Activated CD8-positive, alpha-beta memory T cell treated with anti-CD3 and anti-CD28 coated beads, Interleukin-2, amount 10 ng/mL, durations not matched to agents 7 days and 5 days (primary cell): ENCODE measurements at regions of chr16 and their contacts with region 1.

Region 1: GRCh38 chr16:66588981-66589713 is 9.9 kb downstream of the CMTM2 start:
- DNase-seq: peak; percentile 91
- ATAC-seq: peak; percentile 98
- H3K4me3 Mint-ChIP-seq: peak overlapping the region; percentile 73
- H3K27ac Mint-ChIP-seq: peak overlapping the region; percentile 75
- H3K4me1 Mint-ChIP-seq: peaks cover 36% of the 10 kb centered on the region
- H3K27me3 Mint-ChIP-seq: peaks cover 4% of the 10 kb centered on the region

Region 2: GRCh38 chr16:66474750-66475199 is 114.4 kb before region 1 on chr16:
- CTCF ChIA-PET with region 1: interaction called, 24 read pairs
- DNase-seq: peak; percentile 88
- ATAC-seq: peak; percentile 90
- H3K4me3 Mint-ChIP-seq: no peak overlapping the region
- H3K27ac Mint-ChIP-seq: peak overlapping the region; percentile 63
- H3K4me1 Mint-ChIP-seq: peaks cover 35% of the 10 kb centered on the region
- H3K27me3 Mint-ChIP-seq: no peaks in the 10 kb centered on the region

Region 3: DNA sequence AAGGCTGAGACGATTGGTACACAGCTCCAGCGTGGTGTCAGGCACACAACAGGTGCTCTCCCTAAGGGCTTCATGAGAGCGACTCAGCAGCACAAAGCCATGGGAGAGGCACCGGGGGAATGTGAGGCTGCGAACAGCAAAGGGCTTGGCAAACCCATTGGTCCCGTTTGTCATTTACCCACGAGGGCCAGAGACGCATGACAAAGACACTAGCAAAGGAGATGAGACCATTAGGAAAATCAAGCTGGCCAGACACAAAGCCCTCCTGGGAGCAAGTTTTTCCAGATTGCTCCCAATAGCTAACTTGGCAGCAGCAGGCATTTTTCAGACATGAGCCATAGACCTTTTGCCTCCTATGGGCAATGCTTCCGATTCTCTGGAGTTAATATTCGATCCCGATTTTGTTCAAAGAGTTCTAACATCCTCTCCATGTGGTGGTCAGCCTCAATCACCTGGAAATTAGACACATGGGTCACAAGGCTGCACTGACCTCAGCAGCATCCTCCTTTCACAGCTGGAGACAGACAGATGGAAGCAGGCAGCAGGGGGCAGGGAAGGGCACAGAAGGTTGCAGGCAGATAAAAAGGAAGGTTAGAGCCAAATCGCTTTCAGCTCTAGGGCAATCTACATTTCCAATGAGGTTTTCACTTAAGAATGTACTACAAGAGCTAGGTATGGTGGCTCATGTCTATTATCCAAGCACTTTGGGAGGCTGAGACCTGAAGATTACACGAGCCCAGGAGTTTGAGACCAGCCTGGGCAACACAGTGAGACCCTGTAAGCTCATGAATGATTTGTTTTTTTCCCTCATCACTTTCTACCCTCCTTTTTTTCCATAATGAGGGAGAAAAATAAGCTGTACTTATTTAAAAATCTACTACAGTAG is 77.3 kb before region 1 on chr16:
- CTCF ChIA-PET with region 1: interaction called, 16 read pairs
- DNase-seq: peak; percentile 40
- ATAC-seq: no peak
- H3K4me3 Mint-ChIP-seq: no peak overlapping the region
- H3K27ac Mint-ChIP-seq: no peak overlapping the region
- H3K4me1 Mint-ChIP-seq: peaks cover 26% of the 10 kb centered on the region
- H3K27me3 Mint-ChIP-seq: no peaks in the 10 kb centered on the region

Region 4: DNA sequence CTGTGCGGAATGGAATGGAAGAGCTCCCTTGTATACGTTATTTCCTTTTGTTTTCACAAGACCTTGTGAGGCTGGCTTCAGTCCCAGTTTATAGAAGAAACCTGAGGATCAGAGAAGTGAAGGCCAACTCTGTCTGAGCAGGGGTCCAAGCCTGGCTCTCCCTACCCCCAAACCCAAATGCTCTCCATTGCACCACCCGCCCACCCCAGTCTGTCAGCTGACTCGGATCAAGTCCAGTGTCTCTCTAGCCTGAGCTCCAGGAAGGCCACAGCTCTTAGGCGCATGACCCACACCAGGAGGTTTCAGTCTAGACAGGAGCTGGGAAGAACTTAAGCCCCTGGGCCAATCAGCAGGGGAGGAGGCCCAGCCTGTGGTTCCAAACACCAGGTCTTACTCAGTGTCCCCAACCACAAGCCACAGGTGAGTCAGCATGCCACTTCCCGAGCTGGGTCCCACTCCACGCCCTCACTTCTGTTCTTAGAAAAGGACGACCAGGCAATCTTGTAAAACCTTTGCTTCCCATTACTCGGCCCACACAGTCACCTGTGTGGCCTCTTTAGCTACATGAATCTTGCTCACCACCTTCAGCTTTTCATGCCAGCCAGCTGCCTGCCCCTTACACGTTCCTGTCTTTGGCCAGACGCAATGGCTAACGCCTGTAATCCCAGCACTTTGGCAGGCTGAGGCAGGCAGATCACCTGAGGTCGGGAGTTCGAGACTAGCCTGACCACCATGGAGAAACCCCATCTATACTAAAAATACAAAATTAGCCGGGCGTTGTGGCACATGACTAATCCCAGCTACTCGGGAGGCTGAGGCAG is 67.0 kb before region 1 on chr16:
- CTCF ChIA-PET with region 1: interaction called, 20 read pairs
- DNase-seq: peak; percentile 98
- ATAC-seq: peak; percentile 84
- H3K4me3 Mint-ChIP-seq: peak overlapping the region; percentile 62
- H3K27ac Mint-ChIP-seq: peak overlapping the region; percentile 92
- H3K4me1 Mint-ChIP-seq: peaks cover 94% of the 10 kb centered on the region
- H3K27me3 Mint-ChIP-seq: no peaks in the 10 kb centered on the region

Region 5: GRCh38 chr16:66539623-66540469 is 49.3 kb before region 1 on chr16:
- CTCF ChIA-PET with region 1: no interaction called
- DNase-seq: no peak
- ATAC-seq: peak; percentile 54
- H3K4me3 Mint-ChIP-seq: peak overlapping the region; percentile 3
- H3K27ac Mint-ChIP-seq: peak overlapping the region; percentile 63
- H3K4me1 Mint-ChIP-seq: peaks cover 16% of the 10 kb centered on the region
- H3K27me3 Mint-ChIP-seq: no peaks in the 10 kb centered on the region

Region 6: GRCh38 chr16:66562407-66562806 is 26.7 kb before region 1 on chr16:
- CTCF ChIA-PET with region 1: interaction called, 59 read pairs
- DNase-seq: no peak
- ATAC-seq: no peak
- H3K4me3 Mint-ChIP-seq: no peak overlapping the region
- H3K27ac Mint-ChIP-seq: peak overlapping the region; percentile 75
- H3K4me1 Mint-ChIP-seq: peaks cover 71% of the 10 kb centered on the region
- H3K27me3 Mint-ChIP-seq: no peaks in the 10 kb centered on the region

Region 7: DNA sequence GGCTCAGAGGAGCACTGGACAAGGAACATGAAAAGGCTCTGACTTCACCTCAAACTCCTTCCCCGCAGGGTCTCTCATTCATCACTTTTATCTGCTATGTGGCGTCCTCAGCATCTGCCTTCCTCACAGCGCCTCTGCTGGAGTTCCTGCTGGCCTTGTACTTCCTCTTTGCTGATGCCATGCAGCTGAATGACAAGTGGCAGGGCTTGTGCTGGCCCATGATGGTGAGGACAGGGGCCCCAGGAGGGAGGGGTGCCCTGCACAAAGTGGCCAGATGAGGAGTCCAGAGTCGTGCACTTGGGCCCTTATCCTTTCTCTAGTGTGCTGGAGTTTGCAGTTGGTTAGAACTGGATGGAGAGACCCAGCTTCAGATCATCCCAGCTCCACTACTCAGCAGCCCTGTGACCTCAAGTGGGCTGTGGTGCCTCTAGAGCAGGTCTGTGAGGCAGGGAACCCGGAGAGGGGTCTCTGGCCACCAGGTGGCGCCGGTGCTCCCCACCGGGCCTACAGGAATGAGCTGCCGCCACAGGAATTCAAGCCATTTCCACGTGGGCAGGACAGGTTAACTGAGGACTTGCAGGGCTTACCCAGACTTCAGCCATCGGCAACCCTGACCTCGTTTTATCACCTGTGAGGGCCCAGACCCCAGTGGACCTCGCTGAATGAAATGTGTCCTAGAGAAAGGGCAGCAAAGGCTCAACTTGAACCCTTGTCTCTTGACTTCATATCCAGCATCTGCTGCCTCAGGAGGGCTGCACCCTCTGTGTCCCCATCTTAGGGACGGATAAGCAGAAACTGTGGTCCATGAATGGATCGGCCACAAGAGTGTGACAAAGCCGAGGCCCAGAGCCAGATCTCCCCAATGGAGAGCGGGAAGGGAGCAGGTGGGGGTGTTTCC is 19.3 kb after region 1 on chr16:
- CTCF ChIA-PET with region 1: interaction called, 31 read pairs
- DNase-seq: peak; percentile 86
- ATAC-seq: peak; percentile 17
- H3K4me3 Mint-ChIP-seq: no peak overlapping the region
- H3K27ac Mint-ChIP-seq: peak overlapping the region; percentile 59
- H3K4me1 Mint-ChIP-seq: peaks cover 46% of the 10 kb centered on the region
- H3K27me3 Mint-ChIP-seq: no peaks in the 10 kb centered on the region